Posterior vena cava (tissue), 2 donors: ENCODE measurements at regions of chr19 and their contacts with region 1.

Region 1: DNA sequence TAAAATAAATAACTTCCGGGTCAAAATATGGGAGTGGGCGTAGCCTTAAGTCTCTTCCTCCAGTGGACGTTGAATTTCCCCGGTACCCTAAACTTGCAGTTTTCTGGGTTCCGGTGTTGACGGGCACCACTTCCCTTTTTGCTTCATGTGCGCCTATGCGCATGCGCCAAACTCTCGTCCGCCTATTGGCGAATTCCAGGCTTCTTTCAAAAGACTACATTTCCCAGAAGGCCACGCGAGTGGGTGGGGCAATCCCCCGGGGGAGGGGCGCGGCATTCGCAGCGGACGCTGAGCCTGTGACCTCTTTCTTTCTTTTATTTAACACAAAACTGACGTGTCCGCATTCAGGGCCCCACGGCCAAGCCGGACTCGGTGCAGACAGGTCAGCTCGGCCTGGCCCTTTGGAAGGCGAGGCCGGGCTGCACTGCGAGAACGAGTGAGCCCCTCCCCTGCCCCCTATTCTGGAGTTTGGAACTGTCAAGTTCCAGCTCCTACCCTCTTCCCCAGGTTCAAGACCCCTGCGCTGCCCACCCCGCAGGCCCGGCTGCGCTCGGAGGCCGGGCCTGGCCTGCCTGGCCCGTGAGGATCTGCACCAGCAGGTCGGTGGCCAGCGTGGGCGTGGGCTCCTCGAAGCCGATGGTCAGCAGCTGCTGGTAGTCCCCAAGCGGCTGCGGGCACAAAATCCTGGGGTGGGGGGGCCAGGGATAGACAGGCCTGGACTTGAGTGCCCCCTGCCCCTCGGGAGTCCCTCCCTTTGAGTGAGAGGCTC is 4.1 kb downstream of the C19orf67 start:
- DNase-seq: peak; percentile 100

Region 2: DNA sequence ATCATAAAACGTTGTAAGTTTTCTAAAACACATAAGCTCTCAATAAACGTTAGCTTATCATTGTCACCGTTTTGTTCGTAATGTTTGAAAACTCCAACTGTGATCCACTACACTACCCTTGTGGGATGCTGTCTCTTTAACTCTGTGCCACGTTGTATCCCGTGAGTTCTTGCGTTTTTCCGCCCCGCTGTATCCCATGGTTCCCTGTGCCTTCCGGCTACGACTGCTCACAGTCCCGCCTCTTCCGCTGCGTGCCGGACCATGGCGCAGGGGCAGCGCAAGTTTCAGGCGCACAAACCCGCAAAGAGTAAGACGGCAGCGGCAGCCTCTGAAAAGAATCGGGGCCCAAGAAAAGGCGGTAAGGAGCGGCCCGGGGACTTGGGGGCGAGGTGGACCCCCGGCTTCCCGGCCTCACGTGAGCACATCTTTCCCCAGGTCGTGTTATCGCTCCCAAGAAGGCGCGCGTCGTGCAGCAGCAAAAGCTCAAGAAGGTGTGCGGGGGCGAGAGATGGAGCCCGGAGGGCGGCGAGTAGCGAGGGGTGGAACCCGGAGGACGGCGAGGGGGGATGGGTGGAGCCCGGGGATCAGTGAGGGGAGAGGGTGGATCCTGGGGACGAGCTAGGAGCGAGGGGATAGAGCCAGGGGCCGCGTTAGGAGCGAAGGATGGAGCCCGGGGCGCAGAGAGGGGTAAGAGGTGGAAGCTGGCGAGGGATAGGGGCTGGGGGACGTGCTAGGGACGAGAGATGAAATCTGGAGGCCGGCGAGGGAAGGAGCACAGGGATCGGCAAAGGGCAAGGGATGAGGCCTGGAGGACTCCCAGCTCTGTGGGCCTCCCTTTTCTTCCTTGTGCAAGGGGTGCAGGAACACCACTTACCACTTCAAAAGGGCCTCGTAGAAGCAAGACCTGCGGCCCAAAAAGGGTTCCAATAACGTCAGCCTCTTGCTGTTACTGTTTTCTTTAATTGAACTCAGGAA is 307.0 kb before region 1 on chr19 and contains the start of gene C19orf53:
- intact Hi-C with region 1: loop called in 1 of 2 experiments (anchors 10 kb)
- DNase-seq: peak; percentile 97
- total RNA-seq, gene C19orf53: 54.8 to 63.4 TPM

Region 3: GRCh38 chr19:14136509-14137281 is 55.2 kb after region 1 on chr19 and contains the start of gene ASF1B:
- intact Hi-C with region 1: loop called in 1 of 2 experiments (anchors 5 kb)
- DNase-seq: peak; percentile 100
- total RNA-seq, gene ASF1B: 0.33 to 0.37 TPM